Panc1 (cell line): ENCODE measurements at regions of chr6 and their contacts with region 1.

Region 1: GRCh38 chr6:148342357-148343046 is at the start of gene SASH1:
- DNase-seq: no peak
- ATAC-seq: peak; percentile 94
- H3K4me3 ChIP-seq: peak within 1 kb of the TSS; percentile 52 to 65
- H3K27ac ChIP-seq: peak within 1 kb of the TSS; percentile 80
- H3K4me1 ChIP-seq: peaks cover 10% of the 10 kb centered on the region
- H3K27me3 ChIP-seq: no peaks in the 10 kb centered on the region
- CTCF ChIP-seq: no peak
- total RNA-seq, gene SASH1: 6.6 TPM

Region 2: GRCh38 chr6:148471624-148472159 is 129.2 kb after region 1 on chr6:
- CTCF ChIA-PET with region 1: no interaction called
- POLR2A ChIA-PET with region 1: no interaction called
- in situ Hi-C with region 1: no loop called
- intact Hi-C with region 1: no loop called
- DNase-seq: no peak
- ATAC-seq: no peak
- H3K4me3 ChIP-seq: no peak overlapping the region
- H3K27ac ChIP-seq: no peak overlapping the region
- H3K4me1 ChIP-seq: no peaks in the 10 kb centered on the region
- H3K27me3 ChIP-seq: no peaks in the 10 kb centered on the region
- CTCF ChIP-seq: no peak

Region 3: GRCh38 chr6:148915810-148916209 is 573.3 kb after region 1 on chr6:
- CTCF ChIA-PET with region 1: no interaction called
- POLR2A ChIA-PET with region 1: interaction called, 15 read pairs
- in situ Hi-C with region 1: no loop called
- intact Hi-C with region 1: no loop called
- DNase-seq: no peak
- ATAC-seq: no peak
- H3K4me3 ChIP-seq: no peak overlapping the region
- H3K27ac ChIP-seq: no peak overlapping the region
- H3K4me1 ChIP-seq: no peaks in the 10 kb centered on the region
- H3K27me3 ChIP-seq: 0 out of 2 replicates have a peak, but pooled peaks cover 2% of the 10 kb centered on the region
- CTCF ChIP-seq: no peak